Caco-2 (cell line): ENCODE measurements at regions of chrX and their contacts with region 1.

Region 1: GRCh38 chrX:2690856-2691542 is at the start of gene CD99:
- DNase-seq: peak; percentile 95 to 96
- H3K4me3 ChIP-seq: peak within 1 kb of the TSS; percentile 94
- H3K4me3 Mint-ChIP-seq: peak within 1 kb of the TSS; percentile 76
- H3K27ac Mint-ChIP-seq: peak within 1 kb of the TSS; percentile 89
- H3K4me1 ChIP-seq: peaks cover 22% of the 10 kb centered on the region
- H3K4me1 Mint-ChIP-seq: peaks cover 28% of the 10 kb centered on the region
- H3K27me3 ChIP-seq: no peaks in the 10 kb centered on the region
- H3K27me3 Mint-ChIP-seq: no peaks in the 10 kb centered on the region
- CTCF ChIP-seq: no peak
- total RNA-seq, gene CD99: 362 and 407 TPM in 2 replicates

Region 2: GRCh38 chrX:2654436-2655340 is 36.3 kb before region 1 on chrX:
- CTCF ChIA-PET with region 1: no interaction called
- POLR2A ChIA-PET with region 1: no interaction called
- intact Hi-C with region 1: loop called (anchors 2 kb)
- DNase-seq: peak; percentile 74 to 77
- H3K4me3 ChIP-seq: peak overlapping the region; percentile 32
- H3K4me3 Mint-ChIP-seq: peak overlapping the region; percentile 76
- H3K27ac Mint-ChIP-seq: peak overlapping the region; percentile 86
- H3K4me1 ChIP-seq: peaks cover 43% of the 10 kb centered on the region
- H3K4me1 Mint-ChIP-seq: peaks cover 7% of the 10 kb centered on the region
- H3K27me3 ChIP-seq: no peaks in the 10 kb centered on the region
- H3K27me3 Mint-ChIP-seq: no peaks in the 10 kb centered on the region
- CTCF ChIP-seq: peak in 1 of 2 experiments; percentile 24

Region 3: DNA sequence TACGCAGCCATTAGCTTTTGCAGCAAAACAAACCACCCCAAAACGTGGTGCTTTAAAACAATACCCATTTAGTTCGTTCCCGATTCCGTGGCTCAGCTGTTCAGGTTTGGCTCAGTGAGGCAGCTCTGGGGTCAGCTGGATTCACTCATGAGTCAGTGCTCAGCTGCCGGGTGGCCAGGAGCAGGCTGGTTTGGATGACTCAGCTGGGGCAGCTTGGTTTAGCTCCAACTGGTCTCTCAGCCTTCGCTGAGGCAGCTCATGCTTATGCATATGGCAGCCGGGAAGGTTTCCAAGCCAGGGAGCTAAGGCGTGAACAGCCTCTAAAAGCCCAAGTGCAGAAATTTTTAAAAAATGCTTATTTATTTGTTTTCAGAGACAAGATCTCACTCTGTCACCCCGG is 13.2 kb before region 1 on chrX:
- CTCF ChIA-PET with region 1: no interaction called
- POLR2A ChIA-PET with region 1: no interaction called
- intact Hi-C with region 1: loop called (anchors 1 kb)
- DNase-seq: peak in 1 of 2 experiments; percentile 49
- H3K4me3 ChIP-seq: no peak overlapping the region
- H3K4me3 Mint-ChIP-seq: no peak overlapping the region
- H3K27ac Mint-ChIP-seq: peak overlapping the region; percentile 3
- H3K4me1 ChIP-seq: peaks cover 25% of the 10 kb centered on the region
- H3K4me1 Mint-ChIP-seq: peaks cover 17% of the 10 kb centered on the region
- H3K27me3 ChIP-seq: no peaks in the 10 kb centered on the region
- H3K27me3 Mint-ChIP-seq: no peaks in the 10 kb centered on the region
- CTCF ChIP-seq: no peak

Region 4: GRCh38 chrX:2714551-2714950 is 23.6 kb after region 1 on chrX:
- CTCF ChIA-PET with region 1: no interaction called
- POLR2A ChIA-PET with region 1: no interaction called
- intact Hi-C with region 1: loop called (anchors 1 kb)
- DNase-seq: no peak
- H3K4me3 ChIP-seq: no peak overlapping the region
- H3K4me3 Mint-ChIP-seq: peak overlapping the region; percentile 50
- H3K27ac Mint-ChIP-seq: peak overlapping the region; percentile 65
- H3K4me1 ChIP-seq: peaks cover 33% of the 10 kb centered on the region
- H3K4me1 Mint-ChIP-seq: peaks cover 30% of the 10 kb centered on the region
- H3K27me3 ChIP-seq: no peaks in the 10 kb centered on the region
- H3K27me3 Mint-ChIP-seq: no peaks in the 10 kb centered on the region
- CTCF ChIP-seq: no peak

Region 5: GRCh38 chrX:2767650-2768455 is 76.9 kb after region 1 on chrX:
- CTCF ChIA-PET with region 1: no interaction called
- POLR2A ChIA-PET with region 1: no interaction called
- intact Hi-C with region 1: loop called (anchors 1 kb)
- DNase-seq: peak; percentile 93 to 96
- H3K4me3 ChIP-seq: no peak overlapping the region
- H3K4me3 Mint-ChIP-seq: peak overlapping the region; percentile 51
- H3K27ac Mint-ChIP-seq: peak overlapping the region; percentile 98
- H3K4me1 ChIP-seq: peaks cover 28% of the 10 kb centered on the region
- H3K4me1 Mint-ChIP-seq: peaks cover 25% of the 10 kb centered on the region
- H3K27me3 ChIP-seq: no peaks in the 10 kb centered on the region
- H3K27me3 Mint-ChIP-seq: no peaks in the 10 kb centered on the region
- CTCF ChIP-seq: peak in 1 of 2 experiments; percentile 3